Right ventricle myocardium inferior (tissue), 1 donor: ENCODE measurements at regions of chr7 and their contacts with region 1.

Region 1: GRCh38 chr7:85041605-85042216 is 145.1 kb downstream of the SEMA3D start:
- DNase-seq: no peak
- ATAC-seq: no peak

Region 2: GRCh38 chr7:85186521-85187241 is 145.0 kb after region 1 on chr7 and contains the start of gene SEMA3D:
- intact Hi-C with region 1: loop called (anchors 5 kb)
- DNase-seq: peak; percentile 77
- ATAC-seq: peak; percentile 94
- total RNA-seq, gene SEMA3D: 1.6 TPM

Region 3: DNA sequence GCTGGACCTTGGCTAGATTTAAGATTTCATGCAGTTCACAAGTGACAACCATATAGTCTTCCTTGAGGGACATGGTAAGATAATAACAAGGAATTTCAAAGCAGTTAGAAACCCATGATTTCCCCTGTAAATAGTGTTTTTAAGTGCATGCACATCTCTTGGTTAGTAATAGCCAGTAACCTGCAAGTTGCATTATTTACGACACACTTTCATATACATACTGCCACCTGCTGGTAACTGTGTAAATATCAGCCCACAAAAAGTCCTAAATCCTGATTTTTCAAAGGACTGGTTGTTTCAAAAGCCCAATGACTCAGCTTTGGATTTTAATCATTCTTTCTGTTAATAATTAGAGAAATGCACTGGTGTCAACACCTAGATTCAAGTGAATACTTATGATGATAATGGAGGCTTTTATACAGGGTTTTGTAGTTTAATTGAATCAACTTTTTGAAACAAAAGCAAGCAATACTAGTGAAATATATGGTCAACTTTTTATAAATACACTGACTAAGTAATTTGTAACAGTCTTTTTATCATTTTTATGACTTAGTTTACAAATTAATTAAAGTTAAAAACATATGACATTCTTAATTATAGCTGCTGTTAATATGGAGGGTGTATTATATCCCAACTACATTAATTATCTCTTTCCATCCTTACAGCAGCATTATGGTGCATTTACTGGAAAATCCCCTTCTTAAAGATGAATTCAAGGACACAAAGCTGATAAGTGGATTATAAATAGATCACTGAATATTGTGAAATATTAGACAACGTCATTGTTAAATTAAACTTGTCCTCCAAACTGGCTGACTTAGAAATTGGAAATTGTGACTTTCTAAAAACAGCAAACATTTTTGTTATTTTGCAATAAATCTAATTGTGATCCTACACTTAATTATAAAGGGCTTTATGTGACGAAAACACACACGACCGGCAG is 512.8 kb after region 1 on chr7:
- intact Hi-C with region 1: loop called (anchors 1 kb)
- DNase-seq: no peak
- ATAC-seq: no peak